Vagina (tissue), 2 donors: ENCODE measurements at regions of chr5 and their contacts with region 1.

Region 1: GRCh38 chr5:55645304-55645703 is 66.8 kb downstream of the SLC38A9 start:
- DNase-seq: no peak
- H3K4me3 ChIP-seq: no peak overlapping the region
- H3K27ac ChIP-seq: no peak overlapping the region
- H3K4me1 ChIP-seq: no peaks in the 10 kb centered on the region
- H3K27me3 ChIP-seq: no peaks in the 10 kb centered on the region
- CTCF ChIP-seq: no peak
- POLR2A ChIP-seq: no peak

Region 2: DNA sequence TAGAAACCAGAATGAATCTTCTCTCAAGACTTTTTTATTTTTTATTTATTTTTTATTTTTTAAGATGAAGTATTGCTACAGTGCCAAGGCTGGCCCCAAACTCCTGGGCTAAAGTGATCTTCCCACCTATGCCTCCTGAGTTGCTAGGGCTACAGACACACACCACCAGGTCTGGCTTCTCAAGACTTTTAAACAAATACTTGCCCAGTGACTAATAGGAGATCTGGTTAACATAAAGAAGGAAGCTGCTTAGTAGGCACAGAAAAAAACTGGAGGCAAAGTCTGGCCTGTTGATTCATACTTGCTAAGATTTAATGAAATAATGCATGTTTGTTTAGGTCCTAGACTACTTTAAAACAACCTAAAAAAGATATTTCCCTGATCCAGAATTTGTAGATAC is 23.1 kb after region 1 on chr5:
- intact Hi-C with region 1: loop called (anchors 2 kb)
- DNase-seq: no peak
- H3K4me3 ChIP-seq: no peak overlapping the region
- H3K27ac ChIP-seq: no peak overlapping the region
- H3K4me1 ChIP-seq: peaks cover 10% of the 10 kb centered on the region
- H3K27me3 ChIP-seq: no peaks in the 10 kb centered on the region
- CTCF ChIP-seq: no peak
- POLR2A ChIP-seq: no peak

Region 3: DNA sequence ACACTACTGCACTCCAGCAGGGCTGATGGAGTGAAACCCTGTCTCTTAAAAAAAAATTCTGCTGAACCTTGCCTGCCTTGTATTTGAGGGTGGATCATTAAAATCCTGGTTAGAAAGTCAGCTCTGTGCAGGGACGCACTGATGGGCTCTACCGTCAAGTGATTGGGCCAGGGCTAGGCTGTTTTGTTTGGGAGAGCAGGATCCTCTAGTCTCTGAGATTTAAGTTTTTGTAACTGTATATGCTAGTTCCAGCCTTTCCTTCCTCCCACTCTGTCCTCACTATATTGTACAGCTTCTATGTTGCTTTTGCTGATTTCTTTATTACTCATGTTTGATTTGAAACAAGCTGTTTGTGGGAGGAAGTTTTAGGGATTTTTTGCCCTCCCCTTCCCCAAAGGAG is 104.1 kb after region 1 on chr5:
- intact Hi-C with region 1: no loop called
- DNase-seq: no peak
- H3K4me3 ChIP-seq: no peak overlapping the region
- H3K27ac ChIP-seq: no peak overlapping the region
- H3K4me1 ChIP-seq: no peaks in the 10 kb centered on the region
- H3K27me3 ChIP-seq: no peaks in the 10 kb centered on the region
- CTCF ChIP-seq: no peak
- POLR2A ChIP-seq: no peak